Activated naive CD4-positive, alpha-beta T cell treated with anti-CD3 and anti-CD28 coated beads for 36 hours (primary cell): ENCODE measurements at regions of chr13 and their contacts with region 1.

Region 1: DNA sequence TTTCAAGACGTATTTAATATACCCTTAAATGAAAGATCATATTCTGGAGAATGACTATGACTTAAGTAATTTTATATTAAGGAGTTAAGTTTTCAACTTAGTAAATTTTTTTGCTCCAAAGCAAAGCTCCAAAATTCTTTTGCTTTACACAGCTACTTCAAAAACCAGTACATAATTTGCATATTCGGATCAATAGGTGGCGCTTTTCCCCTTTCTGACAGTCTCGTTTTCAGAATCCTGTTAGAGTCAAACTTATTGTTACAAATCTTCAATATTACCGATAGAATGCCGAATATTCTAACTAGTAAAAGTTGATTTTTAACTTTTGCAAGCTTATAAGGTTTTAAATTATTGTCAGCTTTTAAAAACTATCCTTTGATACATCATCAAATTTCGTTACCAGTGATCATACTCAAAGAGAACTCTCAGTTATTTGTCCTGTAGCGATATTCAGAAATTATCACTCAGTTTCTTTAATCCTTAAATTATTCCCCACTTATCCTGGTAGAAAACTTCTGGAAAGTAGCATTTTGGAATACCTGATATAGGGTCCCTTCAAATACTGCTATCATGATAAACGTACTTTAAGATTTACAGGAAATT is 852.7 kb upstream of the KLHL1 start:
- DNase-seq: peak; percentile 8
- H3K4me3 Mint-ChIP-seq: no peak overlapping the region
- H3K27ac Mint-ChIP-seq: no peak overlapping the region
- H3K4me1 Mint-ChIP-seq: no peaks in the 10 kb centered on the region
- H3K27me3 Mint-ChIP-seq: no peaks in the 10 kb centered on the region

Region 2: DNA sequence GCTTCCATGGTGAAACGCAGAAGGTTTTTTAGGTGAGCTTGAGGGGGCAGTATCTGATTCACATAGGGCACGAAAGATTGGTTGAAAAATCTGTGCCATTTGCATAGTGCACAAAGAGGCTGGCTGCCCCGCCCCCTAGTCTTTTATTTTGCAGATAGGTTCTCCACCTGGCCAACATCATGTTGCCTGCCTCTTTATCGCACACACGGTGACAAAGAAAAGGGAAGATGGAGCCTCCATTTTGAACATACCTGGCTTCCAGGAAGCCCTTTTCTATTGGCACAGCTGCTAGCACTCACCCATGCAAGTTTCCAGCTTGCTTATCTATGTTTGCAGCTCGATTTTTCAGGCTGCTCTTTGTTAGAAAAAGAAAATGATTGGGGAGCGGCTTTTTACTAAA is 536.5 kb before region 1 on chr13:
- CTCF ChIA-PET with region 1: no interaction called
- intact Hi-C with region 1: no loop called
- DNase-seq: no peak
- H3K4me3 Mint-ChIP-seq: no peak overlapping the region
- H3K27ac Mint-ChIP-seq: no peak overlapping the region
- H3K4me1 Mint-ChIP-seq: no peaks in the 10 kb centered on the region
- H3K27me3 Mint-ChIP-seq: no peaks in the 10 kb centered on the region

Region 3: GRCh38 chr13:70623239-70623638 is 337.7 kb before region 1 on chr13:
- CTCF ChIA-PET with region 1: no interaction called
- intact Hi-C with region 1: loop called (anchors 1 kb)
- DNase-seq: no peak
- H3K4me3 Mint-ChIP-seq: no peak overlapping the region
- H3K27ac Mint-ChIP-seq: no peak overlapping the region
- H3K4me1 Mint-ChIP-seq: no peaks in the 10 kb centered on the region
- H3K27me3 Mint-ChIP-seq: no peaks in the 10 kb centered on the region

Region 4: GRCh38 chr13:71030784-71031183 is 69.8 kb after region 1 on chr13:
- CTCF ChIA-PET with region 1: no interaction called
- intact Hi-C with region 1: no loop called
- DNase-seq: no peak
- H3K4me3 Mint-ChIP-seq: no peak overlapping the region
- H3K27ac Mint-ChIP-seq: no peak overlapping the region
- H3K4me1 Mint-ChIP-seq: no peaks in the 10 kb centered on the region
- H3K27me3 Mint-ChIP-seq: peaks cover 3% of the 10 kb centered on the region

Region 5: DNA sequence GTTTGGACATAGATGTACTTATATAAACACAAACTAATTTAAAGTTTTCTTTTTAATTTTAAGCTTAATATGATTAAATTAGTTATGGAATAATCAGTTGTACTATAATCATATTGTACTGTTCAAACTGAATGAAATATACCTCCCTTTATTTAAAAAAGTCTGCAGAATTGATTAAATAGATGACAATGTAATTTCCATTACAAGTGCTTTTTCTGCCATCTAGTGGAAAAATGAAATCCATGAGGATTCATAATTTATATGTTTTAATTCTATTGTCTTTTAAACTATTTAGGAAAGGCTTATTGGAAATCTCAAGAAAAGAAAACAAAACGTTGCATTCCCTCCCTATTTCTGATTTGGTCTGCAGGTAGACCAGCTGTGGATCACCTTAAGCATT is 1735.6 kb after region 1 on chr13:
- CTCF ChIA-PET with region 1: no interaction called
- intact Hi-C with region 1: loop called (anchors 5 kb)
- DNase-seq: no peak
- H3K4me3 Mint-ChIP-seq: no peak overlapping the region
- H3K27ac Mint-ChIP-seq: no peak overlapping the region
- H3K4me1 Mint-ChIP-seq: no peaks in the 10 kb centered on the region
- H3K27me3 Mint-ChIP-seq: peaks cover 8% of the 10 kb centered on the region